Naive thymus-derived CD4-positive, alpha-beta T cell (primary cell): ENCODE measurements at regions of chr1 and their contacts with region 1.

Region 1: GRCh38 chr1:11295905-11296304 is 22.9 kb downstream of the UBIAD1 start:
- DNase-seq: peak in 5 of 9 donors; percentile 31 to 55 (median 44)
- ATAC-seq: no peak
- H3K4me3 ChIP-seq: no peak overlapping the region
- H3K4me3 Mint-ChIP-seq: peak overlapping the region in 2 of 10 donors; percentile 18 to 59
- H3K27ac ChIP-seq: peak overlapping the region; percentile 41
- H3K27ac Mint-ChIP-seq: peak overlapping the region in 8 of 9 donors; percentile 55 to 93 (median 85)
- H3K4me1 ChIP-seq: peaks cover 0 to 34% of the 10 kb centered on the region in 2 donors
- H3K4me1 Mint-ChIP-seq: peaks cover 37 to 72% (median 59%) of the 10 kb centered on the region in 7 donors
- H3K27me3 ChIP-seq: no peaks in the 10 kb centered on the region
- H3K27me3 Mint-ChIP-seq: no peaks in the 10 kb centered on the region

Region 2: DNA sequence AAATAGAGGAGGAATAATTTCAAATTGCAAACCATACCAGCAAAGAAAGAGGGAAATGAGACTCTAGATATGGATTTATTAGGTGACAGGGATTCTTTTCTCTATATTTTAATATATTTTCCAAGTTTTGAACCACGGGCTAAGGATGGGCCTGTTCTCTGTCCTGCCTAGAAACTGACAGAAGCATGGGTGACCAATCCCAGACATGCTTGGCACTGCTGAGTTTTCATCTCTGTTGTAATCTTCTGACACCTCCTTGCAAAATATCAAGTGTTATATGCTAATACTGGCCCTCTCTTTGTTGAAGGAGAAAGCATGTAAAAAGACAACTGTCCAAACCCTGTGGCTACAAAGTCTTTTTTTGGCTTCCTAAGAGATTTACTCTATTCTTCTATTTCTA is 107.5 kb before region 1 on chr1:
- CTCF ChIA-PET with region 1: no interaction called
- POLR2A ChIA-PET with region 1: no interaction called
- intact Hi-C with region 1: no loop called
- DNase-seq: no peak
- ATAC-seq: no peak
- H3K4me3 ChIP-seq: no peak overlapping the region
- H3K4me3 Mint-ChIP-seq: no peak overlapping the region
- H3K27ac ChIP-seq: no peak overlapping the region
- H3K27ac Mint-ChIP-seq: peak overlapping the region in 1 of 9 donors; percentile 28
- H3K4me1 ChIP-seq: no peaks in the 10 kb centered on the region
- H3K4me1 Mint-ChIP-seq: peaks cover 0 to 3% (median 0%) of the 10 kb centered on the region in 7 donors
- H3K27me3 ChIP-seq: no peaks in the 10 kb centered on the region
- H3K27me3 Mint-ChIP-seq: no peaks in the 10 kb centered on the region

Region 3: DNA sequence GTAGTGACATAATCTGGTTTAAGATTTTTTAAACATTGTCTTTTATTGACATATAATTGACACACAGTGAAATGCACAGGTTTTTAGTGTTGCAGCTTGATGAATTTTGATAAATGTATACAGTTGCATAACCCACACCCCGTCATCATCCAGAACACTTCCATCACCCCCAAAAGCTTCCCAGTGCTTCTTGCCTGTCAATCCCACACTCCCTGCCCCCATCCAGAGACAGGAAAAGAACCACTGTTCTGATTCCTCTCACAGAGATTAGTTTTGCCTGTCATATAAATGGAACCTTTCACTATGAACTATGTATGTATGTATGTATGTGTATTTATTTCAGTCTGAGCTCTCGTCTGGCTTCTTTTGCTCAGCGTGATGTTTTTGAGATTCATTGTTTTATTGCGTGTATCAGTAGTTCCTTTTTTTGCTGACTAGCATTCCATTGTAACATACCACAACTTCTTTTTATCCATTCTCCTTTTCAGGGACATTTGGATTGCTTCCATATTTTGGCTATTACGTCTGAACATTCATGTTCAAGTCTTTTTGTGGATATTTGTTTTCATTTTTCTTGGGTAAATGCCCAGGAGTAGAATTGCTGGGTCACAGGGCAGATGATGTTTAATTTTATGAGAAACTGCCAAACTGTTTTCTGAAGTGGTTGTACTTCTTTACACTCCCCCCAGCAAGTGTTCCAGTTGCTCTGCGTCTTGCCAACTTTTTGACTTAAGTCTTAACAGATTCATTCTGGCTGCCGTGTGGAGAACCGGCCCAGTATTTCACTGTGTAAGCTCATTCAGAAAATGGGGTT is 14.2 kb before region 1 on chr1:
- CTCF ChIA-PET with region 1: interaction called, 9 read pairs
- POLR2A ChIA-PET with region 1: interaction called, 31 read pairs
- intact Hi-C with region 1: loop called in 1 of 2 experiments (anchors 2 kb)
- DNase-seq: no peak
- ATAC-seq: no peak
- H3K4me3 ChIP-seq: peak overlapping the region; percentile 40
- H3K4me3 Mint-ChIP-seq: peak overlapping the region; percentile 49 to 85 (median 73)
- H3K27ac ChIP-seq: peak overlapping the region; percentile 71
- H3K27ac Mint-ChIP-seq: peak overlapping the region; percentile 70 to 98 (median 90)
- H3K4me1 ChIP-seq: peaks cover 21 to 81% of the 10 kb centered on the region in 2 donors
- H3K4me1 Mint-ChIP-seq: peaks cover 64 to 97% (median 87%) of the 10 kb centered on the region in 7 donors
- H3K27me3 ChIP-seq: no peaks in the 10 kb centered on the region
- H3K27me3 Mint-ChIP-seq: no peaks in the 10 kb centered on the region